Natural killer cell (primary cell): ENCODE measurements at regions of chr1 and their contacts with region 1.

Region 1: GRCh38 chr1:101282314-101283038 is 45.7 kb downstream of the S1PR1 start:
- DNase-seq: no peak
- ATAC-seq: no peak
- H3K4me3 ChIP-seq: no peak overlapping the region
- H3K4me3 Mint-ChIP-seq: peak overlapping the region; percentile 75
- H3K27ac ChIP-seq: peak overlapping the region; percentile 83
- H3K27ac Mint-ChIP-seq: peak overlapping the region; percentile 96 to 98
- H3K4me1 ChIP-seq: peaks cover 75% of the 10 kb centered on the region
- H3K4me1 Mint-ChIP-seq: peaks cover 91 to 93% of the 10 kb centered on the region in 2 donors
- H3K27me3 ChIP-seq: no peaks in the 10 kb centered on the region
- H3K27me3 Mint-ChIP-seq: no peaks in the 10 kb centered on the region
- CTCF ChIP-seq: no peak

Region 2: DNA sequence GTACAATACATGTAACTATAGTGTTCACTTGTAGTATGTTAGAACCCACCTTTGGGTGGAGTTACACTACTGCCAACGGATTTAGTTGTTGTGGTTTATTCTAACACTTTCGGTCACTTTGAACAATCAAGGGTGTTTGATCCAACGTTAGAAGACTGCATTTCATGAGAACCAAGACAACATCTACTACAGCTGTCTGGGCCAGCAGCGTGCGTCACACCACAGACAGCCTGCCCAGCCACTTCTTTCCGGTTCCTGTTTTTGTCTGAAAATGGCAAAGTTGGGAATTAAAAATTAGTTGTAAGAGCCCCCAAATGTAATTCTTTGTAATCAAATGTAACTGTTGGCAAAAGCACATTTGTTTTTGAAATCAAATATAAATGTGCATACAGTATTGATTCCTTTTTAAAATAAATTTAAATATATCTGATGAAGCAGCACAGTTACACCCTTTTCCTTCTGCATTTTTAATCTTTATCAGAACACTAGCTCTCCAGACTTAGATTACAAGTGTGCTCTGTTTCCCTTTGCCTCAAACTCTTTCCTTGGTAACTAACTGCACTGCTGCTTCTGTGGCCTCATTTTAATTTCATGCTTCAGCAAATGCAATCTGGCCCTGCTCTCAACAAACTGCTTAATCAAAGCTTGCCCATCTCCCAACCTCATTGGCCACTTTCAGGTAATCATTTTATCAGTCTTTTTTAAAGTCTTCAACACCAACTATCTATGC is 170.3 kb before region 1 on chr1:
- intact Hi-C with region 1: loop called (anchors 1 kb)
- DNase-seq: peak; percentile 46 to 93
- ATAC-seq: peak; percentile 93 to 96 (median 96)
- H3K4me3 ChIP-seq: no peak overlapping the region
- H3K4me3 Mint-ChIP-seq: peak overlapping the region; percentile 68
- H3K27ac ChIP-seq: peak overlapping the region; percentile 88
- H3K27ac Mint-ChIP-seq: peak overlapping the region; percentile 81 to 90
- H3K4me1 ChIP-seq: peaks cover 15% of the 10 kb centered on the region
- H3K4me1 Mint-ChIP-seq: peaks cover 34 to 43% of the 10 kb centered on the region in 2 donors
- H3K27me3 ChIP-seq: no peaks in the 10 kb centered on the region
- H3K27me3 Mint-ChIP-seq: no peaks in the 10 kb centered on the region
- CTCF ChIP-seq: no peak

Region 3: DNA sequence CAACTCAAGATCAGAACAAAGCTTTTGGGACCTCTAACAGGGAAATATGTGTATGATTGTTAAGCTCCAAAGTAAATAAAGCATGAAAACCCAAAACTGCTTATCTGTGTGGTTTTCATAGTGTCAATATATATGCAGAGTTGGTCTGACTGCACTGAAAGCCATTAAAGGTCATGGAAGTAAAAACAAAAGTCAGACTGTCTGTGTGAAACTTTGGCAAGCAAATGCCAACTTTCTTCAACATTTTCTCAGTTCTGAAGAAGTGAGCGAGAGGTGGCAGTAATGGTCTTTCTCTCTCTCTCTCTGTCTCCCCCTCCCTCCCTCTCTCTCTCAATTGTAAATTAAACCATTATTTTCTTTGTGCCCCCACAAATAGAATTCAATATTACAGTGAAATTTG is 145.7 kb before region 1 on chr1:
- intact Hi-C with region 1: loop called (anchors 5 kb)
- DNase-seq: peak in 1 of 2 donors; percentile 74
- ATAC-seq: peak; percentile 63 to 70 (median 66)
- H3K4me3 ChIP-seq: no peak overlapping the region
- H3K4me3 Mint-ChIP-seq: peak overlapping the region; percentile 80
- H3K27ac ChIP-seq: peak overlapping the region; percentile 69
- H3K27ac Mint-ChIP-seq: peak overlapping the region; percentile 88 to 93
- H3K4me1 ChIP-seq: peaks cover 6% of the 10 kb centered on the region
- H3K4me1 Mint-ChIP-seq: peaks cover 38 to 50% of the 10 kb centered on the region in 2 donors
- H3K27me3 ChIP-seq: no peaks in the 10 kb centered on the region
- H3K27me3 Mint-ChIP-seq: no peaks in the 10 kb centered on the region
- CTCF ChIP-seq: no peak

Region 4: DNA sequence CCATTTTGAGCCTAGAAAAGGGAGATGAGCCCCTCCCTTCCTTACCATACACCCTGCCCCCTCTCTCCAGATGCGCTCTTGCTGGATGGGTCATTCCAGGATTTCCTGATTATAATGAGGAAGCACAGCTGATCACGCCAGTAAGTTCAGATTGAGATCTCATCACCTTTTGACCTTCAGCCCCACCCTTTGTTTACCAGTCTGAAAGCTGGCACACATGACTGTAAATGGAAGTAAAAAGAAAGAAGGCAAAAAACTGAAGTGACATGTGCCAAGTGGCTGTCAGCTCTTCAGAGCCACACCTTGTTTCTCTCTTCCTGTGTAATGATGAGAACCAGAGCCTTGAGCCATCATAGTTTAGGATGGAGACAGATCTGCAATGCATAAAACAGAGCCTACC is 17.8 kb before region 1 on chr1:
- intact Hi-C with region 1: loop called (anchors 2 kb)
- DNase-seq: peak in 1 of 2 donors; percentile 61
- ATAC-seq: peak; percentile 66 to 73 (median 70)
- H3K4me3 ChIP-seq: no peak overlapping the region
- H3K4me3 Mint-ChIP-seq: peak overlapping the region; percentile 32
- H3K27ac ChIP-seq: peak overlapping the region; percentile 49
- H3K27ac Mint-ChIP-seq: peak overlapping the region; percentile 56 to 57
- H3K4me1 ChIP-seq: peaks cover 31% of the 10 kb centered on the region
- H3K4me1 Mint-ChIP-seq: peaks cover 64 to 72% of the 10 kb centered on the region in 2 donors
- H3K27me3 ChIP-seq: no peaks in the 10 kb centered on the region
- H3K27me3 Mint-ChIP-seq: no peaks in the 10 kb centered on the region
- CTCF ChIP-seq: no peak